ENCODE measurements at regions of chr5 and their contacts with region 1.

Region 1: GRCh38 chr5:37575541-37576489 is 196.7 kb downstream of the WDR70 start:
- DNase-seq: peak; percentile 95
- H3K4me3 ChIP-seq: no peak overlapping the region
- H3K27ac ChIP-seq: peak overlapping the region; percentile 98
- H3K4me1 ChIP-seq: peaks cover 86% of the 10 kb centered on the region
- H3K27me3 ChIP-seq: no peaks in the 10 kb centered on the region
- CTCF ChIP-seq: no peak

Region 2: DNA sequence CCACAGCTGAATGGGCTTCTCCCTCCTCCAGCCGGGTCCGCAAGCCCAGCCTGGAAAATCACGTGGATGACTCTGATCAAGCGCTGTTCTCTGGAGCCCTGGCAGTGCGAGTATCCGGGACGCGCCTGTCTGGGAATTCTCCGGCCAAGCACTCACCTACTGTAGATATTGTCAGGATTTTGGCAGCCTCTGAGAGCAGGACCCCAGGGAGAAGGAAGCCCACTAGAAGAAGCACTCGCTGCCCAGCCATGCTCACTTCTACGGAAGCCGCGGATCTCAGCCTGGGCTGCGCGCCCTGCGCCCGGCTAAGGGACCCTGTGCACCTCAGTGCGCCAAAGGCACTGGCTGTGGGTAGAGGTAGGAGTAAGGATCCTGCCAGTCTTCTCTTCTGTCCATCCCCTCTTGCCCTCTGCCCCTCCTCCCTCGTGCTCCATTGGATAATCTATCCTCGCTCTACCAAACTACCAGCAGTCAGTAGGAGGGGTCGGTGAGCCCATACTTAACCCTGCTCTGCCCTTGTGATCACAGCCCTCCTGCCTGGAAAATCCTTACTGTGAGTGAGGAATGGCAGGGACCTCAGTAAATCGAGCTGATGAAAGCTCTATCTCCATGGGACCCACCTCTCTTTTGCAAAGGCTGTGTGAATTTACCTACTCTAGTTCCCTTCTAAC is 1509.1 kb before region 1 on chr5 and contains the start of gene UGT3A2:
- CTCF ChIA-PET with region 1: no interaction called
- POLR2A ChIA-PET with region 1: interaction called, 5 read pairs
- intact Hi-C with region 1: loop called (anchors 5 kb)
- DNase-seq: peak; percentile 92
- H3K4me3 ChIP-seq: peak within 1 kb of the TSS; percentile 87
- H3K27ac ChIP-seq: peak within 1 kb of the TSS; percentile 97
- H3K4me1 ChIP-seq: peaks cover 33% of the 10 kb centered on the region
- H3K27me3 ChIP-seq: no peaks in the 10 kb centered on the region
- CTCF ChIP-seq: no peak
- total RNA-seq, gene UGT3A2: 528 and 529 TPM in 2 replicates

Region 3: GRCh38 chr5:37355166-37355565 is 220.6 kb before region 1 on chr5:
- CTCF ChIA-PET with region 1: no interaction called
- POLR2A ChIA-PET with region 1: no interaction called
- intact Hi-C with region 1: no loop called
- DNase-seq: no peak
- H3K4me3 ChIP-seq: no peak overlapping the region
- H3K27ac ChIP-seq: no peak overlapping the region
- H3K4me1 ChIP-seq: no peaks in the 10 kb centered on the region
- H3K27me3 ChIP-seq: no peaks in the 10 kb centered on the region
- CTCF ChIP-seq: no peak

Region 4: DNA sequence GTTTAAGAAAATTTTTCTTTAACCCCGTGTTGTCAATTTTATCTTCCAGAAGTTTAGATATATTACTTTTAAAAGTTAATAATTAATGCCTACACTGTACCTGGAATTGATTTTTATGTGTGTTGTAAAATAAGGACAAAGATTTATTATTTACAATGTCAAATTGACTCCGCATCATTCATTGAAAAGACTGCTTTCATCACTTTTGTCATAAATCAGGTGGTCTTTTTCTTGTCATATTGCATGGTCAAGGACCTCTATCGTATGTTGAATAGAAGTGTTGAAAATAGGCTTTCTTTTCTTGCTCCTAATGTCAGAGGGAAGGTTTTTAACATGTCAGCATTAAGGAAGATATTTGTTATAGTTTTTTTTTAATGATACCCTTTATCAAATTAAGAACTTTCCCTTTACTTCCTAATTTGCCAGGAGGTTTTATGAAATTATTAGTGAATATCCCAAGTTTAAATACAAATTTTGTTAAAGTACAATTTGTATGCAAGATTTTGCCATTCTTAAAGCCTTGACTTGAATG is 104.1 kb before region 1 on chr5:
- CTCF ChIA-PET with region 1: no interaction called
- POLR2A ChIA-PET with region 1: no interaction called
- intact Hi-C with region 1: loop called (anchors 10 kb)
- DNase-seq: no peak
- H3K4me3 ChIP-seq: no peak overlapping the region
- H3K27ac ChIP-seq: no peak overlapping the region
- H3K4me1 ChIP-seq: no peaks in the 10 kb centered on the region
- H3K27me3 ChIP-seq: no peaks in the 10 kb centered on the region
- CTCF ChIP-seq: no peak

Region 5: GRCh38 chr5:37722236-37723146 is 146.7 kb after region 1 on chr5:
- CTCF ChIA-PET with region 1: no interaction called
- POLR2A ChIA-PET with region 1: no interaction called
- intact Hi-C with region 1: loop called (anchors 1 kb)
- DNase-seq: peak; percentile 85
- H3K4me3 ChIP-seq: peak overlapping the region; percentile 21
- H3K27ac ChIP-seq: peak overlapping the region; percentile 93
- H3K4me1 ChIP-seq: peaks cover 75% of the 10 kb centered on the region
- H3K27me3 ChIP-seq: no peaks in the 10 kb centered on the region
- CTCF ChIP-seq: no peak

Region 6: GRCh38 chr5:38193015-38193581 is 617.3 kb after region 1 on chr5:
- CTCF ChIA-PET with region 1: no interaction called
- POLR2A ChIA-PET with region 1: no interaction called
- intact Hi-C with region 1: loop called (anchors 10 kb)
- DNase-seq: peak; percentile 81
- H3K4me3 ChIP-seq: no peak overlapping the region
- H3K27ac ChIP-seq: no peak overlapping the region
- H3K4me1 ChIP-seq: no peaks in the 10 kb centered on the region
- H3K27me3 ChIP-seq: no peaks in the 10 kb centered on the region
- CTCF ChIP-seq: peak; percentile 94

Measured in A673 (cell line).